OCI-LY7 (cell line): ENCODE measurements at regions of chr4 and their contacts with region 1.

Region 1: DNA sequence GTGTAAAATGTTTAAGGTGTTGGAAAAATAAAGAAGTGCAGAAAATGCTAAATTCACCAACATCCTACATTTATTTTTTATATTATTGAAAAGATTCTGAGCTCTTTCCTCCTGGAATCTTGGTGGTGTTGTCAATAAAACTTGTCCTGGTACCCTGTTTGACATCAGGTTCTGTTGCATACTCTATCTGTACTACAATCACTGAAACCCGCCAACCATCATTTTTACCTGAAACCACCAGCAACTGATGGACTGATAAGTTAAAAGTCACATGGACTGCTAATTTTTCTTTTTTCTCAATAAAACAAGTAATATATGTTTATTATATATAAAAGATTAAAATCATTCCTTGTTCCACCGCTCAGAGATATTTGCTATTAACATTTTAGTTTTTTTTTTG is 23.4 kb downstream of the STAP1 start:
- DNase-seq: no peak
- H3K4me3 ChIP-seq: no peak overlapping the region
- H3K27ac ChIP-seq: no peak overlapping the region
- H3K4me1 ChIP-seq: peaks cover 25% of the 10 kb centered on the region
- CTCF ChIP-seq: no peak

Region 2: GRCh38 chr4:67320645-67321044 is 261.3 kb before region 1 on chr4:
- CTCF ChIA-PET with region 1: no interaction called
- POLR2A ChIA-PET with region 1: no interaction called
- intact Hi-C with region 1: no loop called
- DNase-seq: no peak
- H3K4me3 ChIP-seq: no peak overlapping the region
- H3K27ac ChIP-seq: no peak overlapping the region
- H3K4me1 ChIP-seq: no peaks in the 10 kb centered on the region
- CTCF ChIP-seq: no peak

Region 3: DNA sequence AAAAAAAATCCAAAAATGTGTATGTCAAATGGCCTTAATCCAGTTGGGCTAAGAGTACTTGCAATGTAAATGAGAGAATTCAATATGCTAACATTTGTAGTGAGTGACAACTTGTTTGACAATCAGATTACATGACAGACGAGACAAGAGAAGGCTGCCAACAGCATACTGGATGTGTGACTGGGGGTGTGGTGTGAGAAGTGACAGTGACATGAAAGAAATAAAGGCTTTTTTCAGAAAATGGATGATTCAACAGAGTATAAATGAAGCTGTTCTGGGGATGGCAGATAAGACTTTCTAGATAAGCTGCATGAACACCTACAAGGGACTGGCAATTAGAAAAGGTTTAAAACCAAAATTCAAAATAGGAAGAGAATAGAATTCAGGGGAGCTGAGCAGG is 180.0 kb before region 1 on chr4:
- CTCF ChIA-PET with region 1: no interaction called
- POLR2A ChIA-PET with region 1: no interaction called
- intact Hi-C with region 1: no loop called
- DNase-seq: no peak
- H3K4me3 ChIP-seq: no peak overlapping the region
- H3K27ac ChIP-seq: no peak overlapping the region
- H3K4me1 ChIP-seq: no peaks in the 10 kb centered on the region
- CTCF ChIP-seq: no peak

Region 4: GRCh38 chr4:67522851-67523671 is 58.9 kb before region 1 on chr4:
- CTCF ChIA-PET with region 1: no interaction called
- POLR2A ChIA-PET with region 1: no interaction called
- intact Hi-C with region 1: no loop called
- DNase-seq: no peak
- H3K4me3 ChIP-seq: no peak overlapping the region
- H3K27ac ChIP-seq: no peak overlapping the region
- H3K4me1 ChIP-seq: no peaks in the 10 kb centered on the region
- CTCF ChIP-seq: no peak

Region 5: GRCh38 chr4:67615119-67615518 is 33.2 kb after region 1 on chr4:
- CTCF ChIA-PET with region 1: no interaction called
- POLR2A ChIA-PET with region 1: interaction called, 3 read pairs
- intact Hi-C with region 1: loop called (anchors 1 kb)
- DNase-seq: no peak
- H3K4me3 ChIP-seq: no peak overlapping the region
- H3K27ac ChIP-seq: no peak overlapping the region
- H3K4me1 ChIP-seq: no peaks in the 10 kb centered on the region
- CTCF ChIP-seq: no peak